ENCODE measurements at regions of chr20 and their contacts with region 1.

Region 1: GRCh38 chr20:9912858-9913434 is 74.1 kb upstream of the PAK5 start:
- DNase-seq: peak; percentile 12 to 38 (median 15)
- H3K4me3 ChIP-seq: no peak overlapping the region
- H3K4me3 Mint-ChIP-seq: peak overlapping the region in 1 of 2 donors; percentile 7
- H3K27ac ChIP-seq: no peak overlapping the region
- H3K27ac Mint-ChIP-seq: no peak overlapping the region
- H3K4me1 ChIP-seq: no peaks in the 10 kb centered on the region
- H3K4me1 Mint-ChIP-seq: peaks cover 6% of the 10 kb centered on the region
- H3K27me3 ChIP-seq: peaks cover 0 to 3% of the 10 kb centered on the region in 2 donors
- H3K27me3 Mint-ChIP-seq: peaks cover 9 to 14% (median 10%) of the 10 kb centered on the region in 3 donors
- CTCF ChIP-seq: peak; percentile 82

Region 2: GRCh38 chr20:9407805-9408421 is 505.0 kb before region 1 on chr20:
- intact Hi-C with region 1: loop called in 1 of 2 experiments (anchors 10 kb)
- DNase-seq: peak; percentile 59 to 74 (median 65)
- H3K4me3 ChIP-seq: no peak overlapping the region
- H3K4me3 Mint-ChIP-seq: no peak overlapping the region
- H3K27ac ChIP-seq: no peak overlapping the region
- H3K27ac Mint-ChIP-seq: no peak overlapping the region
- H3K4me1 ChIP-seq: no peaks in the 10 kb centered on the region
- H3K4me1 Mint-ChIP-seq: no peaks in the 10 kb centered on the region
- H3K27me3 ChIP-seq: no peaks in the 10 kb centered on the region
- H3K27me3 Mint-ChIP-seq: peaks cover 0 to 4% (median 1%) of the 10 kb centered on the region in 3 donors
- CTCF ChIP-seq: peak; percentile 87

Region 3: GRCh38 chr20:9616833-9617489 is 296.0 kb before region 1 on chr20:
- intact Hi-C with region 1: loop called (anchors 5 kb)
- DNase-seq: peak; percentile 50 to 59 (median 58)
- H3K4me3 ChIP-seq: no peak overlapping the region
- H3K4me3 Mint-ChIP-seq: no peak overlapping the region
- H3K27ac ChIP-seq: no peak overlapping the region
- H3K27ac Mint-ChIP-seq: no peak overlapping the region
- H3K4me1 ChIP-seq: peaks cover 16 to 19% of the 10 kb centered on the region in 2 donors
- H3K4me1 Mint-ChIP-seq: peaks cover 17% of the 10 kb centered on the region
- H3K27me3 ChIP-seq: peaks cover 49 to 51% of the 10 kb centered on the region in 2 donors
- H3K27me3 Mint-ChIP-seq: peaks cover 50 to 61% (median 52%) of the 10 kb centered on the region in 3 donors
- CTCF ChIP-seq: peak; percentile 89

Region 4: GRCh38 chr20:9955646-9956045 is 42.7 kb after region 1 on chr20:
- intact Hi-C with region 1: no loop called
- DNase-seq: no peak
- H3K4me3 ChIP-seq: no peak overlapping the region
- H3K4me3 Mint-ChIP-seq: no peak overlapping the region
- H3K27ac ChIP-seq: no peak overlapping the region
- H3K27ac Mint-ChIP-seq: no peak overlapping the region
- H3K4me1 ChIP-seq: no peaks in the 10 kb centered on the region
- H3K4me1 Mint-ChIP-seq: no peaks in the 10 kb centered on the region
- H3K27me3 ChIP-seq: no peaks in the 10 kb centered on the region
- H3K27me3 Mint-ChIP-seq: peaks cover 0 to 19% (median 5%) of the 10 kb centered on the region in 3 donors
- CTCF ChIP-seq: no peak